ENCODE measurements at regions of chr19 and their contacts with region 1.

Region 1: GRCh38 chr19:5904352-5905113 is at the start of gene VMAC:
- DNase-seq: peak; percentile 97 to 100 (median 100)
- H3K4me3 ChIP-seq: peak within 1 kb of the TSS; percentile 69 to 100 (median 94)
- H3K27ac ChIP-seq: peak within 1 kb of the TSS; percentile 36 to 94 (median 86)
- H3K27me3 ChIP-seq: no peaks in the 10 kb centered on the region
- CTCF ChIP-seq: peak in 25 of 56 donors; percentile 4 to 49 (median 21)
- total RNA-seq, gene VMAC: 3.0 to 14.3 (median 7.2) TPM

Region 2: GRCh38 chr19:5967994-5968430 is 63.5 kb after region 1 on chr19:
- intact Hi-C with region 1: loop called in 1 of 2 experiments (anchors 5 kb)
- DNase-seq: peak in 9 of 10 donors; percentile 40 to 77 (median 70)
- H3K4me3 ChIP-seq: peak overlapping the region in 19 of 59 donors; percentile 0 to 35 (median 13)
- H3K27ac ChIP-seq: peak overlapping the region; percentile 31 to 99 (median 90)
- H3K27me3 ChIP-seq: no peaks in the 10 kb centered on the region
- CTCF ChIP-seq: peak; percentile 77 to 98 (median 91)

Region 3: DNA sequence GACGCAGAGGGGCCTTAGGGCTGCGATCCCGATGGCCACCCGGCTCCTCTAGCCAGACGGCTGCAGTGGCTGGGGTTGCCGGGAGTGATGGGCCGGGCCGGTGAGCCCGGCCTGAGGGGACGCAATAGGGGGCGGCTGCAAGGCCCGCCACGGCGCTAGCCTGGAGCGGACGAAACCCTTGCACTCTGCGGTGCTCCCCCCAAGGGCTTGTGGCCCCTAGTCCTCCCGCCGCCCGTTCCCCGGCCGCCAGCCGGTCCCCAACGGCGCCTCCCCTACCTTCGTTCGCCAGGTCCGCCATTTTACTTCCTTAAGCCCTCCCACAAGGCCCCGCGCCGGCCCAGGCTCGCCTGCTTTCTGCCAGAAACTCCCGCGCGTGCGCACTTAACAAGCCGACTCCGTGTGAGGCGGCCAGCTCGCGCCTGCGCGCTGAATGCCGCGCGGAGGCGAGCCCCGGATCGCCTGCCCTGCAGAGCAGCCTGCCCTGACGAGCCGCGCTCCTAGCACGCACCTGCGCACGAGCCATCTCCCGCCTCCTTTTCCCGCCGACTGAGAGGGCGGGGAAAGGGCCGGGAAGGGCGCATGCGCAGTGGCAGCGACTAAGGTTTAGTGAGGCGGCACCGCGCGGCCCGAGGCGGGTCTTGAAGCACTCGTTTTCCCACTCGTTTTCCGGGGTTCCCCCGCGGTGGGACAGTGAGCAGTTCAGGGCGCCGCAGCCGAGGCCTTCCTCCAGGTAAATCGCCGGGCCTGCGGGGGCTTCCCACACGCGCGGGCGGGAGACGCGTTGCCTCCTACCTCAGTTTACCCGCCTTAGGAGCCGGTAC is 73.5 kb after region 1 on chr19 and contains the start of gene RANBP3:
- intact Hi-C with region 1: loop called (anchors 2 kb)
- DNase-seq: peak; percentile 93 to 98 (median 97)
- H3K4me3 ChIP-seq: peak within 1 kb of the TSS; percentile 67 to 100 (median 98)
- H3K27ac ChIP-seq: peak within 1 kb of the TSS; percentile 65 to 98 (median 94)
- H3K27me3 ChIP-seq: no peaks in the 10 kb centered on the region
- CTCF ChIP-seq: peak in 41 of 56 donors; percentile 3 to 66 (median 36)
- total RNA-seq, gene RANBP3: 71.9 to 120 (median 93.1) TPM